Endothelial cell of umbilical vein (primary cell): ENCODE measurements at regions of chr15 and their contacts with region 1.

Region 1: DNA sequence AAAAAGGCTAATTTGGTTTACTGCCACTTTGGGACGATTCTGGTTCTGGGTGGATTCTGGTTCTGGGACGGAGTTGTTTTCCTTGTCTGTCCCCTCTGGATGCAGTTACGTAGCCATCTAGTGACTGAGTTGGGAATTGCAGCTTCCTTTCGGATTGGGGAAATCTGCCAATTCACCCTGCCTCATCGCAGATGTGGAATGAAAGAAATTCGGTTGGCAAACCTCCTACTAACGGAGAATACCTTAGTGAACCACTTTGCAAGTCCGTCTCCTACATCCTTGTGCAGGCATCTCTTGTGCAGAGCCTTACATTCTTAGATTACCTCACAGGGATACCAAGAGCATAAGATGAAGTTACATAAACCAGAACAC is 31.5 kb upstream of the AP4E1 start:
- DNase-seq: peak; percentile 90
- H3K4me3 ChIP-seq: peak overlapping the region; percentile 19 to 72 (median 45)
- H3K27ac ChIP-seq: no peak overlapping the region
- H3K4me1 ChIP-seq: peaks cover 9% of the 10 kb centered on the region
- H3K27me3 ChIP-seq: peaks cover 10 to 16% of the 10 kb centered on the region in 2 experiments
- CTCF ChIP-seq: peak; percentile 89 to 96
- POLR2A ChIP-seq: no peak

Region 2: GRCh38 chr15:50496692-50497091 is 380.3 kb before region 1 on chr15:
- CTCF ChIA-PET with region 1: no interaction called
- POLR2A ChIA-PET with region 1: no interaction called
- dilution Hi-C with region 1: no loop called
- intact Hi-C with region 1: loop called (anchors 10 kb)
- DNase-seq: no peak
- H3K4me3 ChIP-seq: no peak overlapping the region
- H3K27ac ChIP-seq: no peak overlapping the region
- H3K4me1 ChIP-seq: no peaks in the 10 kb centered on the region
- H3K27me3 ChIP-seq: no peaks in the 10 kb centered on the region
- CTCF ChIP-seq: no peak
- POLR2A ChIP-seq: no peak

Region 3: DNA sequence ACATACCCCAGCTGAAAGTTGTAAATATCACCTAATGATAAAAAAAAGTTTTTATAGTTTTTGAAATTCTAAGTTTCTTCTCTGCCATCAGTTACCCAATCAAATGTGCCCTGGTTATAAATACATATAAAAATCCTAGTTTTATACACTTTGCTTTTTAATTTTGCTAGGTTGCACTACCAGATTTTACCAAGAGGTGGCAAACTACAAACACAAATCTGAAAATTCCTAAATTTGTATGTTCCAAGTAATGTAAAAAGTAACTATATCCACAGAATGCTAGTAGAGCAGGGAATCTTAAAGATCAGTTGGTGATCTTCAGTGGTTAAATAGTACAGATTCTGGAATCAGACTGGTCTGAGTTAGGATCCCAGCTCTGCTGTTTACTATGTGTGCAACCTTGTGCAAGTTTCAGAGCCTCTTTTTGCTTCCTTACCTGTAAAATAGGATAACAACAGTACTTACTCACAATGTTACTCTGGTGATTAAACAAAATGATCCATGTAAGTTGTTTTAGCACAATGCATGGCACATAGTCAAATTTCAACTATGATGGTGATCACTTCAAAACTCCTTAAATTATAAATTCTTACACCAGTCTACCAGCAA is 201.3 kb before region 1 on chr15:
- CTCF ChIA-PET with region 1: interaction called, 34 read pairs
- POLR2A ChIA-PET with region 1: no interaction called
- dilution Hi-C with region 1: no loop called
- intact Hi-C with region 1: loop called (anchors 1 kb)
- DNase-seq: peak; percentile 69
- H3K4me3 ChIP-seq: no peak overlapping the region
- H3K27ac ChIP-seq: no peak overlapping the region
- H3K4me1 ChIP-seq: no peaks in the 10 kb centered on the region
- H3K27me3 ChIP-seq: no peaks in the 10 kb centered on the region
- CTCF ChIP-seq: peak; percentile 36 to 41
- POLR2A ChIP-seq: no peak

Region 4: GRCh38 chr15:50686468-50687301 is 190.3 kb before region 1 on chr15 and contains the start of gene TRPM7:
- CTCF ChIA-PET with region 1: interaction called, 15 read pairs
- POLR2A ChIA-PET with region 1: no interaction called
- dilution Hi-C with region 1: no loop called
- intact Hi-C with region 1: no loop called
- DNase-seq: peak; percentile 84
- H3K4me3 ChIP-seq: peak within 1 kb of the TSS; percentile 79 to 90 (median 89)
- H3K27ac ChIP-seq: peak within 1 kb of the TSS; percentile 68
- H3K4me1 ChIP-seq: peaks cover 17% of the 10 kb centered on the region
- H3K27me3 ChIP-seq: no peaks in the 10 kb centered on the region
- CTCF ChIP-seq: no peak
- POLR2A ChIP-seq: peak; percentile 94
- total RNA-seq, gene TRPM7: 26.3 and 34.8 TPM in 2 replicates

Region 5: GRCh38 chr15:50865515-50866353 is 11.2 kb before region 1 on chr15:
- CTCF ChIA-PET with region 1: interaction called, 18 read pairs
- POLR2A ChIA-PET with region 1: no interaction called
- dilution Hi-C with region 1: no loop called
- intact Hi-C with region 1: no loop called
- DNase-seq: no peak
- H3K4me3 ChIP-seq: no peak overlapping the region
- H3K27ac ChIP-seq: no peak overlapping the region
- H3K4me1 ChIP-seq: no peaks in the 10 kb centered on the region
- H3K27me3 ChIP-seq: peaks cover 4 to 14% of the 10 kb centered on the region in 2 experiments
- CTCF ChIP-seq: no peak
- POLR2A ChIP-seq: no peak